ENCODE measurements at regions of chr17 and their contacts with region 1.

Region 1: GRCh38 chr17:1467898-1468492 is 12.0 kb upstream of the CRK start:
- DNase-seq: no peak
- ATAC-seq: no peak
- H3K4me3 ChIP-seq: no peak overlapping the region
- H3K27ac ChIP-seq: no peak overlapping the region
- H3K4me1 ChIP-seq: no peaks in the 10 kb centered on the region
- H3K27me3 ChIP-seq: no peaks in the 10 kb centered on the region
- CTCF ChIP-seq: no peak
- POLR2A ChIP-seq: no peak
- RAD21 ChIP-seq: no peak

Region 2: DNA sequence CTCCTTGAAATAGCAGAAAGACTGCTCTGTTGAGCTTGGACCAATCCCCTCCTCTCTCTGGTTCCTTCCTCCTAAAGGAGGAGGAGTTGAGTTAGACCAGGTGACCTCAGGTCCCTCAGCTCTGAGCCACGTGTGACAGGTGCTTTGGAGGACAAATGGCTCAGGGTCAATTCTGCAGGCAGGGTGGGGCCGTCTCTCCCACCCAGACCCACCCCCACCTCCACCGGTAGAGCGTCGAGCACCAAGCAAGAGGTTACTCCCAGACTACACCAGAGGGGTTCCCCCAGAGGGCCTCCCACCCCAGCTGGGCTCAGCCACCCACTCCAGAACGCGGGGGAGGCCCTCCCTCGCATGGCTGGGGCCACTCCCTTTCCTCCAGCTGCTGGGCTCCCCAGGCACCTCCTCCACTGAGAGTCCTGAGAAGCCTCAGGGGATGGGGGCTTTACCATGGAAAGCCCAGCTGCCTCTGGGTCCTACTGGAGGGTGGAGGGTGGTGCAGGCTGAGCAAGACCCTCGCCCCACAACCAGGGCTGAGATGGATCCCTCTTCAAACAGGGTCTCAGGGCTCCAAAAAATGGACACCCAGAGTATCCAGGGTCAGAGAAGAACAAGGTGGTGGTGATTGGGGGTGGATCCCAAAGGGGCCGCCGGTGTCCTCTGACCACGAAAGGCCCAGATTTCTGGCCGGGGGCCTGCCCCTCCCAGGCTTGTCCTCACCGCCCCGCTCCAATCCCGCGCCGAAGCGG is 16.9 kb after region 1 on chr17:
- CTCF ChIA-PET with region 1: no interaction called
- POLR2A ChIA-PET with region 1: no interaction called
- dilution Hi-C with region 1: no loop called
- in situ Hi-C with region 1: no loop called
- intact Hi-C with region 1: loop called (anchors 1 kb)
- DNase-seq: no peak
- ATAC-seq: peak; percentile 13
- H3K4me3 ChIP-seq: peak overlapping the region; percentile 94
- H3K27ac ChIP-seq: peak overlapping the region; percentile 96
- H3K4me1 ChIP-seq: peaks cover 20% of the 10 kb centered on the region
- H3K27me3 ChIP-seq: no peaks in the 10 kb centered on the region
- CTCF ChIP-seq: no peak
- POLR2A ChIP-seq: 0 out of 2 replicates have a peak, but pooled peaks have one; percentile 19
- RAD21 ChIP-seq: no peak

Region 3: GRCh38 chr17:1920948-1921351 is 453.0 kb after region 1 on chr17:
- CTCF ChIA-PET with region 1: no interaction called
- POLR2A ChIA-PET with region 1: no interaction called
- dilution Hi-C with region 1: no loop called
- in situ Hi-C with region 1: no loop called
- intact Hi-C with region 1: no loop called
- DNase-seq: no peak
- ATAC-seq: no peak
- H3K4me3 ChIP-seq: no peak overlapping the region
- H3K27ac ChIP-seq: no peak overlapping the region
- H3K4me1 ChIP-seq: no peaks in the 10 kb centered on the region
- H3K27me3 ChIP-seq: peaks cover 34% of the 10 kb centered on the region
- CTCF ChIP-seq: no peak
- POLR2A ChIP-seq: no peak
- RAD21 ChIP-seq: no peak

Region 4: DNA sequence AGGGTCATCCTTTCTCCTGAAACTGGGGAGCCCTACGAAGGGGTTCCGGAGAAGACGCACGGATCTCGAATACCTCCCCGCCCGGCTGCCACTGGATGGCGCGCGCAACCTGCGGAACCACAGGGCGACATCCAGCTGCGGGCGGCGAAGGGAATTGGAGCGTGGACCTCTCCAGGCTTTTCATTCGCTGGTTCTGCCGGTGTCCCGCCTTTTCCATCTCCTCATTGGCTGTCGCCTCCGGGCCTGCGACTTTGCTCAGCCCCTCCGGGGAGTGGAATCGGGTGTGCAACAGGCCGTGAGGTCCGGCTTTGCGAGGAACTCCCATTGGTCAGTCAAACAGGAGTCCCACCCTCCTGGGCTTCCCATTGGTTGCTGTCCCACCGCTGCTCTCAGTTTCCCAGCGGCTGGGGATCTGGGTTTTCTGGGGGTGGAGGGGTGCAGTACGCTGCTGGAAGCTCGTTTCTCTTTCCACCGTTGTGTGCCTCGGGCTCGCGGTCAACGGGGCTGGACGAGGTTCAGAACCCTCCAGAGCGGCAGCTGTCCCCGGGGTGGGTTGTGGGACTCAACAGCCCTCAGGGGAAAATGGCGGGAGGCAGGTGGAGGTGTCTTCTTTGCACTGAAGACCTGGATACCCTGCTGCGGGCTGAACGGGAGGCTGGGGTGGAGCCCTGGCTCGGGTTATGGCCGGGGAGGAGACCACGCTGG is 1580.9 kb after region 1 on chr17:
- CTCF ChIA-PET with region 1: no interaction called
- POLR2A ChIA-PET with region 1: no interaction called
- dilution Hi-C with region 1: no loop called
- in situ Hi-C with region 1: no loop called
- intact Hi-C with region 1: no loop called
- DNase-seq: peak; percentile 97
- ATAC-seq: peak; percentile 100
- H3K4me3 ChIP-seq: peak overlapping the region; percentile 69
- H3K27ac ChIP-seq: peak overlapping the region; percentile 61
- H3K4me1 ChIP-seq: no peaks in the 10 kb centered on the region
- H3K27me3 ChIP-seq: no peaks in the 10 kb centered on the region
- CTCF ChIP-seq: peak; percentile 64
- POLR2A ChIP-seq: no peak
- RAD21 ChIP-seq: peak; percentile 71